Activated naive CD4-positive, alpha-beta T cell treated with anti-CD3 and anti-CD28 coated beads, Interleukin-2, amount 10 ng/mL, durations not matched to agents 7 days and 5 days (primary cell): ENCODE measurements at regions of chr16 and their contacts with region 1.

Region 1: DNA sequence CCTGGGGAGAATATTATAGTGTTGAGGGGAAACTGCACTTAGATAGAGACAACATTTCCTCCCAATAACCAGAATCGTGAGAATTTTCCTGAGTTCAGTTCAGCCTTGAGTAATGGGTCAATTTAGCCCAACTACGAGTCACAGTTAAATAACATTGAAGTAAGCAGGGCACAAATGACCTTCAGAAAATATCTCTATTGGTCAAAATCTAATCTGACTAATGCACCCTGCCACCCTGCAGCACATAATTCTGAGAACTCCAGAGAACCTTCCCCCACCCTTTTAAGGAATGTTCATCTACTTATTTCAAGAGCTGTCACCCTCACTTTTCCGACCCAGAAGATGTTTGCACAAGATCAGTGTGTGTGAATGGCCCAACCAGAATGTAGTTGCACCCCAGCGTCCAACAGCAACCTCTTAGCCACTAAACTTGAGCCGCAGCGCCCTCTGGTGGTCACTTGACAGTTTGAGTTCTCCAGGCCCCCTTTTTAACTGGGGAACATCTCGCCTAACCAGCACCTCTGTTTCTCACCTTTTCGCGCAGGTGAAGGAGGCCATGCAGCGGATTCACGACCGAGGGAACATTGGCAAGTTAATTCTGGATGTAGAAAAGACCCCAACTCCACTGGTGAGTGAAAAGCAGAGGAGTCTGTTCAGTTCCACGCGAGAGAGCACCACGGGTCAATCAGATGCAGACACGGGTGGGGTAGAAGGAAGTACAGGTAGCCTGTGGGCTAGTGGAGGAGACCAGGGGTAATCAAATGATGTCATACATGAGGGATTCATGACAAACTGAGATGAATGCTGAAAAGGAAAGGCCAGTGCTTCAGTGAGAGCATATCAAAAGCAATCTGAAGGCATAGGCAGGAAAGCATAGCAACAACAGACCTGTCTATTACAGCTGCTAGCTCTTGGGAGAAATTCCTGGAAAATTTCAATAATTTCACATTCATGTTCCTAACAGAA is 50.8 kb upstream of the CLEC3A start:
- DNase-seq: peak; percentile 83
- H3K4me3 Mint-ChIP-seq: no peak overlapping the region
- H3K27ac Mint-ChIP-seq: no peak overlapping the region
- H3K4me1 Mint-ChIP-seq: no peaks in the 10 kb centered on the region
- H3K27me3 Mint-ChIP-seq: peaks cover 9% of the 10 kb centered on the region

Region 2: GRCh38 chr16:77675464-77676324 is 295.9 kb before region 1 on chr16:
- CTCF ChIA-PET with region 1: interaction called, 12 read pairs
- DNase-seq: peak; percentile 73
- H3K4me3 Mint-ChIP-seq: no peak overlapping the region
- H3K27ac Mint-ChIP-seq: no peak overlapping the region
- H3K4me1 Mint-ChIP-seq: no peaks in the 10 kb centered on the region
- H3K27me3 Mint-ChIP-seq: no peaks in the 10 kb centered on the region

Region 3: GRCh38 chr16:77898671-77899211 is 72.8 kb before region 1 on chr16:
- CTCF ChIA-PET with region 1: no interaction called
- DNase-seq: no peak
- H3K4me3 Mint-ChIP-seq: no peak overlapping the region
- H3K27ac Mint-ChIP-seq: no peak overlapping the region
- H3K4me1 Mint-ChIP-seq: no peaks in the 10 kb centered on the region
- H3K27me3 Mint-ChIP-seq: peaks cover 4% of the 10 kb centered on the region

Region 4: GRCh38 chr16:77912618-77913017 is 59.0 kb before region 1 on chr16:
- CTCF ChIA-PET with region 1: no interaction called
- DNase-seq: no peak
- H3K4me3 Mint-ChIP-seq: no peak overlapping the region
- H3K27ac Mint-ChIP-seq: no peak overlapping the region
- H3K4me1 Mint-ChIP-seq: no peaks in the 10 kb centered on the region
- H3K27me3 Mint-ChIP-seq: no peaks in the 10 kb centered on the region